Mucosa of descending colon (tissue), 3 donors: ENCODE measurements at regions of chr2 and their contacts with region 1.

Region 1: DNA sequence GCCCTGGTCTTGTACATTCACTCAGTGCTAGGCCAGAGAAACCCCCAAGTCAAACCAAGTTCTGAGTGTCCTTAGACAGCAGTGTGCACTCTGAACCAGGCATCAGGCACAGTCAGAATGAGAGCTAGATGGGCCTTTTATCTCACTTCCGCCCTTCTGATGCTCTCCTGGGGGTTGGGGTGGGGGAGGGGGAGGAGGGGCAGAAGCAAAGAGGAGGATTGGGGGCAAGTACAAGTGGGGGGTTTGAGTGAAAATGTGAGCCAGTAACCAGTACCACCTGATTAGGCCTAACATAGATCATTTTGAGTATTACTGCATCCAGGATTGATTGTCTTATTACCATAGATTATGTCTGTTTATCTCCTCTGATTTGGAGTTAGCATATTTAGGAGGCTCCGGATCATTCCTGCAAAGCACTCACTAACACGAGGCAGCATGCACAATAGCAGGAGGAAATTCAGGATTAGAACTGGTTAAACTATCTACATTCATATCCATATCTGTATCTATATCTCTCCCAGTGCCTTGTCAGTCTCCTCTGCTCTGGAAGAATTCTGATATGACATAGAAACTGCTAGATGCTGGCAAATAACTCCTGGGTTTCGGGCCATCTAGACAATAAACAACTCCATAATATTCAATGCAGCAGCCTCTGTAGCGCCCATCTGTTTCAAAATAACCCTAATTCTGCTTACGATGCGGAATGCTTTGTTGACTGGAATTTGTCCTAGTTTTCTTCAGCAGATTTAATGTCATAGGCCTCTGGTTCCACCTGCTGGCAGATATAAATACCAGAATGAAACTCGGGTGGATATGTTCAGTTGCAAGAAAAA is 149.1 kb downstream of the RHBDD1 start:
- DNase-seq: peak in 1 of 3 donors; percentile 59
- ATAC-seq: peak; percentile 63
- H3K4me3 ChIP-seq: no peak overlapping the region
- H3K4me1 ChIP-seq: no peaks in the 10 kb centered on the region
- CTCF ChIP-seq: no peak

Region 2: DNA sequence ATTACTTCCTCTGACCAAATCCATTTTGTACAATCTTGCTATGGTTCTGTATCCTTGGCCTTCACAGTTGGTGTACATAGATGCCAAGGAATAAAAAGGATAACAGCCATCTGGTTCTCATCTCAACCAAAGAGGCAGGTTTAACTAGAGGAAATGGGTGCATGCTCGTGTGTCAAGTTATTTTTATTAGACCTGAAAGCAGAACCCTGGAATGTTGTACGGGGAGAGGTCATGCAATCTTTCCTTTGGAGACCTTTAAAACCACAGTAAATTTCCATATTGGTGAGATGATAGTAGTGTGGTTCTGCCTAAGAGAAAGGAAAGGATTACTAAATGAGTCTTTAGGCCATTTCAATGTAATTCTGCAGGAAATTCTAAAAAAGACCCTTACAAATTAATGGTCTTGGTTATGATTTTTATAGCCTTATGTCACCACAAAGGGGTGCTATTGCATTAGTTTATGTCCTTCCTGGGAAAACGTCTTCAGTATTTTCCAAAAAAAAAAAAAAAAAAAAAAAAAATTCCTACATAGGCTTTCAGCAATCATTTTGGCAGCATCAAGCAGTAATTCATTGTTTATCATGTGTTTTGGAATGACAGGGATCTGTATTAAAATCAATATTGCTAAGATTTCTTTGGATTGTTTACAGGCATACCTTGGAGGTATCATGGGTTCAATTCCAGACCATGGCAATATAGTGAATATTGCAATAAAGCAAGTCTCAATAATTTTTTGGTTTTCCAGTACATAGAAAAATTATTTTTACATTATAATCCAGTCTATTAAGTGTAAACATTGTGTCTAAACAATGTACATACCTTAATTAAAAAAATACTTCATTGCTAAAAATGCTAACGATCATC is 1314.6 kb before region 1 on chr2:
- intact Hi-C with region 1: loop called (anchors 10 kb)
- DNase-seq: no peak
- ATAC-seq: no peak
- H3K4me3 ChIP-seq: no peak overlapping the region
- H3K4me1 ChIP-seq: no peaks in the 10 kb centered on the region
- CTCF ChIP-seq: no peak

Region 3: GRCh38 chr2:226215902-226216503 is 769.0 kb before region 1 on chr2:
- intact Hi-C with region 1: loop called in 1 of 2 experiments (anchors 10 kb)
- DNase-seq: peak in 2 of 3 donors; percentile 41 to 84
- ATAC-seq: peak; percentile 92
- H3K4me3 ChIP-seq: no peak overlapping the region
- H3K4me1 ChIP-seq: no peaks in the 10 kb centered on the region
- CTCF ChIP-seq: peak; percentile 52

Region 4: DNA sequence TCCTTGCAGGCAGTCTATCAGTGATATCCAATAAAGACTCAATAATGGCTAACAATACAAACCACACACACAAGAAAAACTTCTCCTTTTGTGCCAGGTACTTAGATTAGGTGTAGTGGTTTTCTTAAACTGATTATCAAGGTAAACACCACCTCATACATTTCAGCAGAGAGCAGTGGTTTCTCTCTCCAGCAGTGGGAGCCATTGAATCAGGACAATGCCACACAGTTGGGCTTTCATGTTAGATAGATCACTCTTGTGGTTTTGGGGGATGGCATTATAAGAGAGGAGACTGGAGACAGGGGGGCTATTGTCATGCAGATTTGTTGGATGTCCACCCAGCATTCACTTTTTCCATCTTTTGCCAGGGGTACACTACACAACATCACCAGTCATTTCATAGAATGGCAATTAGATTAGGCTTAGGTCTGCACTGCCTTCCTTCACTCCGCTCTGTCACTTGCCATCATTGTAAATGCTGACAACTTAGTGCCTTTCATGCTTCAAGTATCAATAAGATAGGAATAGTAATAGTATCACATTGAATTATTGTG is 171.7 kb before region 1 on chr2:
- intact Hi-C with region 1: loop called in 1 of 2 experiments (anchors 10 kb)
- DNase-seq: no peak
- ATAC-seq: no peak
- H3K4me3 ChIP-seq: no peak overlapping the region
- H3K4me1 ChIP-seq: no peaks in the 10 kb centered on the region
- CTCF ChIP-seq: no peak

Region 5: DNA sequence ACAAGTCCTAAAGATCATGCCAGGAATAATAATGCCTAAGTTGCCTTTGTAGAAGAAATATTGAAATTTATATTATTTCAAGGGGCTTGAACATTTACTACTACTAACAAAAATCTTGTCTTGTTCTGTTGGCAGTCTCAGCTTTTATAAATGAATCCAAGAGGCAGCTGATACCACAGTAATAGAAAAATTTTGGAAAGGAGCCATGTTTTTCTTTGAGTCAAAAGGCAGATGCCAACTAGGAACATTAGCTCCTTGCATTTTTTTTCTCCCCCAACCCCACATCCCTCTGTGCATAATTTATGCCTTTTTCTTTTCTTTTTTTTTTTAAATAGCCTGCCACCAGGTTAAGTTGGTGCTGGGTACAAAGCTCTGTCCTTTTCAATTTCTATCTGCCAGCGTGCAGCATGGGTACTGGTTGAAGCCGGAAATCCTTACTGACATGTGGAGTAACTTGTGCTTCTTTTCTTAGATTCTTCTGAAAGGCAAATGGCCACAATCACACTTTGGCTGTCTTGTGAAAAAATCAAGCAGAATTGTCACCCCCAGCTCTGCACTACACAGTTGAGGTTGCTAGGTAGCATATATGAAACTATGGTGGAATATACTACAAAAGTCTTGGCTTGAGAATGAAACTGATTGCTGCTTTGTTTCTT is 50.3 kb before region 1 on chr2:
- intact Hi-C with region 1: no loop called
- DNase-seq: no peak
- ATAC-seq: no peak
- H3K4me3 ChIP-seq: no peak overlapping the region
- H3K4me1 ChIP-seq: no peaks in the 10 kb centered on the region
- CTCF ChIP-seq: no peak